CD8-positive, alpha-beta T cell (primary cell): ENCODE measurements at regions of chr17 and their contacts with region 1.

Region 1: GRCh38 chr17:17356149-17356930 is 53.2 kb downstream of the NT5M start:
- DNase-seq: peak; percentile 41 to 83 (median 68)
- ATAC-seq: peak; percentile 89
- H3K4me3 ChIP-seq: no peak overlapping the region
- H3K4me3 Mint-ChIP-seq: no peak overlapping the region
- H3K27ac ChIP-seq: no peak overlapping the region
- H3K27ac Mint-ChIP-seq: no peak overlapping the region
- H3K4me1 ChIP-seq: no peaks in the 10 kb centered on the region
- H3K4me1 Mint-ChIP-seq: peaks cover 4% of the 10 kb centered on the region
- H3K27me3 ChIP-seq: no peaks in the 10 kb centered on the region
- H3K27me3 Mint-ChIP-seq: no peaks in the 10 kb centered on the region
- CTCF ChIP-seq: peak; percentile 99

Region 2: DNA sequence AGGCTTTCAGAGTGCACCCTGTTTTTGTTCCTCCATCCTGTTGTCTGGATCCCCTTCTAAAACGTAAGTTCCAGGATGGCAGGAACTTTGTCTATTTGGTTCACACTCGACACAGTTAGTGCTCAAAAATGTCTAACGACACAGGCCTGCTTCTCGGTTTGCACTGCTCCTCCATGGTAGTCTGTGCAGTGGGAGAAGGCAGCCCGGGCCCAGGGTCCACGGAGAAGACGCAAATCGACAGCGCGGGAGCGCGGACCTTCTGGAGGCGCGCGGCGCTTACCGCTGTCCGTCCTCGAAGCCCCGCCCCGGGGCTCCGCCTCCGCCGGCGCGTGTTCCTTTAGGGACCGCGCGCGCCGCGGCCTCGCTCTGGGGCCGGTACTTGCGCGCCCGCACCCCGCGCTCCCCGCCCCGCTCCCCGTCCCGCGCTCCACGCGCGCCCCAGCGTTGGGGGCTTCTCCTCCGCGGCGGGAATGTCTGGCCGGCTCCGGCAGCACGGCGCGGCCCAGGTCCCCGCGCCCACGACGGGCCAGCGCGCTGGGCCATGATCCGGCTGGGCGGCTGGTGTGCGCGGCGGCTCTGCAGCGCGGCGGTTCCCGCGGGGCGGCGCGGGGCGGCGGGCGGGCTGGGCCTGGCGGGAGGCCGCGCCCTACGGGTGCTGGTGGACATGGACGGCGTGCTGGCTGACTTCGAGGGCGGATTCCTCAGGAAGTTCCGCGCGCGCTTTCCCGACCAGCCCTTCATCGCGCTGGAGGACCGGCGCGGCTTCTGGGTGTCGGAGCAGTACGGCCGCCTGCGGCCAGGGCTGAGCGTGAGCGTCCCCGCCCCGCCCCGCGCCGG is 53.1 kb before region 1 on chr17 and contains the start of gene NT5M:
- CTCF ChIA-PET with region 1: no interaction called
- POLR2A ChIA-PET with region 1: no interaction called
- intact Hi-C with region 1: no loop called
- DNase-seq: peak in 8 of 9 experiments; percentile 52 to 82 (median 68)
- ATAC-seq: peak; percentile 54
- H3K4me3 ChIP-seq: peak within 1 kb of the TSS; percentile 44 to 54
- H3K4me3 Mint-ChIP-seq: peak within 1 kb of the TSS; percentile 90
- H3K27ac ChIP-seq: peak within 1 kb of the TSS; percentile 6 to 61
- H3K27ac Mint-ChIP-seq: peak within 1 kb of the TSS; percentile 88
- H3K4me1 ChIP-seq: peaks cover 38% of the 10 kb centered on the region
- H3K4me1 Mint-ChIP-seq: peaks cover 29% of the 10 kb centered on the region
- H3K27me3 ChIP-seq: peaks cover 0 to 4% of the 10 kb centered on the region in 2 experiments
- H3K27me3 Mint-ChIP-seq: peaks cover 2% of the 10 kb centered on the region
- CTCF ChIP-seq: no peak
- total RNA-seq, gene NT5M: 2.2 to 2.4 TPM

Region 3: DNA sequence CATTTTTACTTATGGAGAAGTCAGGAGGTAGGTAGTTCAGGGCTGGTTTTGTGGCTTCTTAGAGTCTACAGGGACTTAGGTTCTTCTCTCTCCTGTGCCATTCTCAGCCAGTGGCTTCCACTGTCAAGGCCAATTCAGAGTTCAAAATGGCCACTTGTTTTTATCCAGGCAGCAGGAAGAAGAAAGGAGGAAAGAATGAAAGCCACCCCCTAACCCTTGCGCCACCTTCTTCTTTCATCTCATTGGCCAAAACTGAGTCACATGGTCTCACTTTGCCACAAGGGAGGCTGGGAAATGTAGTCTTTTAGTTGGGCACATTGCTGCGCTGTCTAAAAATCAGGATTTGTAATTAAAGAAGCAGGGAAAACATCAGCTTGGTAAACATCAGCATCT is 59.7 kb after region 1 on chr17:
- CTCF ChIA-PET with region 1: interaction called, 12 read pairs
- POLR2A ChIA-PET with region 1: no interaction called
- intact Hi-C with region 1: no loop called
- DNase-seq: peak in 2 of 9 experiments; percentile 53 to 66
- ATAC-seq: peak; percentile 64
- H3K4me3 ChIP-seq: no peak overlapping the region
- H3K4me3 Mint-ChIP-seq: no peak overlapping the region
- H3K27ac ChIP-seq: no peak overlapping the region
- H3K27ac Mint-ChIP-seq: no peak overlapping the region
- H3K4me1 ChIP-seq: peaks cover 19% of the 10 kb centered on the region
- H3K4me1 Mint-ChIP-seq: peaks cover 14% of the 10 kb centered on the region
- H3K27me3 ChIP-seq: no peaks in the 10 kb centered on the region
- H3K27me3 Mint-ChIP-seq: no peaks in the 10 kb centered on the region
- CTCF ChIP-seq: no peak

Region 4: DNA sequence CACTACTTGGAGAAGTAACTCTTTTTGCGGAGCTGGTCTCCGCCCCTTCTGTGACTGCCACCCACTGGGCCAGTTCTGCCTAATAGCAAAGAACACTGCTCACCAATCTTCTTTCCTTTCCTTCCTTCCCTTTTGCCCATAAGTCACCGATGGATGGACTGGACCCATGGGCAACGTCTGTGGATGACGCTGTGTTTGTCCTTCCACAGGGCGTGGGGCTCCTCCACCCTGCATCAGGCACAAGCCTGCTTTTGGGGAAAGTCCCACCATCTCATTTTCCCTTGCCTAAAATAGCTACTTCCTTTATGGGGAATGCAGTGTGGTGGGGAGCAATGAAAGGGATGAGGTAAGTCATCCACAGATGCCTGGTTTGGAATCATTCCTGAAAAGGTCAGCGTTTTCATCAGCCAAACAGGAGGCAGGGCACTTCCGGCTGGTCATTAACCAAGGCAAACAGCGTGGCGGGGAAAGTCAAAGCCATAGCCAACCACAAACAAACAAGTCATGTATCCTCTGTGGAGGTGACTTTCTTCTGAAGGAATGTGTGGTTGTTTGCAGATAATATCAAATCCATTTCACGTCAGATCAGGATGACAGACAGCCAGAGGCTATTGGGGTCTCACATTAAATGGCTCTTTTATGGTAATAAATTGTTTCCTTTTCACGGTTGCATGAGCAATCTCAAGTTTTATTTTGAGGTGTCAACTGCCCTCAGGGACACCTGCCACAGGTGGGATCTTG is 89.8 kb after region 1 on chr17:
- CTCF ChIA-PET with region 1: interaction called, 43 read pairs
- POLR2A ChIA-PET with region 1: no interaction called
- intact Hi-C with region 1: loop called in 1 of 2 experiments (anchors 2 kb)
- DNase-seq: no peak
- ATAC-seq: no peak
- H3K4me3 ChIP-seq: no peak overlapping the region
- H3K4me3 Mint-ChIP-seq: no peak overlapping the region
- H3K27ac ChIP-seq: no peak overlapping the region
- H3K27ac Mint-ChIP-seq: no peak overlapping the region
- H3K4me1 ChIP-seq: no peaks in the 10 kb centered on the region
- H3K4me1 Mint-ChIP-seq: no peaks in the 10 kb centered on the region
- H3K27me3 ChIP-seq: no peaks in the 10 kb centered on the region
- H3K27me3 Mint-ChIP-seq: no peaks in the 10 kb centered on the region
- CTCF ChIP-seq: no peak

Region 5: GRCh38 chr17:17568749-17569195 is 212.4 kb after region 1 on chr17:
- CTCF ChIA-PET with region 1: interaction called, 14 read pairs
- POLR2A ChIA-PET with region 1: no interaction called
- intact Hi-C with region 1: loop called in 1 of 2 experiments (anchors 1 kb)
- DNase-seq: peak; percentile 11 to 69 (median 50)
- ATAC-seq: no peak
- H3K4me3 ChIP-seq: no peak overlapping the region
- H3K4me3 Mint-ChIP-seq: no peak overlapping the region
- H3K27ac ChIP-seq: no peak overlapping the region
- H3K27ac Mint-ChIP-seq: no peak overlapping the region
- H3K4me1 ChIP-seq: no peaks in the 10 kb centered on the region
- H3K4me1 Mint-ChIP-seq: no peaks in the 10 kb centered on the region
- H3K27me3 ChIP-seq: no peaks in the 10 kb centered on the region
- H3K27me3 Mint-ChIP-seq: no peaks in the 10 kb centered on the region
- CTCF ChIP-seq: peak; percentile 39

Region 6: GRCh38 chr17:17641621-17642409 is 285.5 kb after region 1 on chr17:
- CTCF ChIA-PET with region 1: interaction called, 179 read pairs
- POLR2A ChIA-PET with region 1: no interaction called
- intact Hi-C with region 1: loop called (anchors 1 kb)
- DNase-seq: peak; percentile 59 to 90 (median 82)
- ATAC-seq: peak; percentile 92
- H3K4me3 ChIP-seq: no peak overlapping the region
- H3K4me3 Mint-ChIP-seq: no peak overlapping the region
- H3K27ac ChIP-seq: no peak overlapping the region
- H3K27ac Mint-ChIP-seq: no peak overlapping the region
- H3K4me1 ChIP-seq: no peaks in the 10 kb centered on the region
- H3K4me1 Mint-ChIP-seq: peaks cover 2% of the 10 kb centered on the region
- H3K27me3 ChIP-seq: no peaks in the 10 kb centered on the region
- H3K27me3 Mint-ChIP-seq: peaks cover 6% of the 10 kb centered on the region
- CTCF ChIP-seq: peak; percentile 75